Left cardiac atrium (tissue), 4 donors: ENCODE measurements at regions of chrX and their contacts with region 1.

Region 1: GRCh38 chrX:14015294-14015693 is 14.4 kb downstream of the GEMIN8 start:
- DNase-seq: no peak
- ATAC-seq: no peak

Region 2: GRCh38 chrX:13614154-13614553 is 401.1 kb before region 1 on chrX:
- intact Hi-C with region 1: no loop called
- DNase-seq: no peak
- ATAC-seq: no peak

Region 3: DNA sequence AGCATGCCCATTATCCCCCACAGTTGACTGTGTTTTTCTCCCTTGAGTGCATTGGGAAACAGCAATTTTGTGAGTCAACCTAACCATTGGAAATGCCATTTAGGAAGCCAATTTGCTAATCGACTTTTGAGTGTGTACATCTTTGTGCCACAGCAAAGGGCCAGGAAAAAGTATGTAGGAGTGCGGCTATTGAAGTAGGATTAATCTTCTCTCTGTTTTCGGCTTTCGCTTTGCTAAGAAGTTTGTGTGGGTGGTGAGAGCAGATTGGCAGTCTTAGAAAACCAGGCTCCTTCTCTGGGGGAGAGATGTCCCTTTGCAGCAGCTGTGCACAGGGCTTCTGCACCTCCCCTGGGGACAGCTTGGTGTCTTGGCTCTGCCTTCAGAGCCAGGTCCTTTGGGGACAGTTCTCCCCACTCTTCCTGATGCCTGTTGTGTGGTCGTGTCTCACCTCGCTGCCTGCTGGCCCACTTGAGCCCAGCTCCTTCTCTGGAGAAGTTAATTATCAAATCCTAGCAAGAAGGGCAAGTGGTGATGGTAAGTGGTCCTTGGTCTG is 60.1 kb before region 1 on chrX:
- intact Hi-C with region 1: loop called in 1 of 2 experiments (anchors 10 kb)
- DNase-seq: no peak
- ATAC-seq: no peak